Activated CD4-positive, alpha-beta T cell treated with anti-CD3 and anti-CD28 coated beads for 36 hours (primary cell): ENCODE measurements at regions of chr11 and their contacts with region 1.

Region 1: DNA sequence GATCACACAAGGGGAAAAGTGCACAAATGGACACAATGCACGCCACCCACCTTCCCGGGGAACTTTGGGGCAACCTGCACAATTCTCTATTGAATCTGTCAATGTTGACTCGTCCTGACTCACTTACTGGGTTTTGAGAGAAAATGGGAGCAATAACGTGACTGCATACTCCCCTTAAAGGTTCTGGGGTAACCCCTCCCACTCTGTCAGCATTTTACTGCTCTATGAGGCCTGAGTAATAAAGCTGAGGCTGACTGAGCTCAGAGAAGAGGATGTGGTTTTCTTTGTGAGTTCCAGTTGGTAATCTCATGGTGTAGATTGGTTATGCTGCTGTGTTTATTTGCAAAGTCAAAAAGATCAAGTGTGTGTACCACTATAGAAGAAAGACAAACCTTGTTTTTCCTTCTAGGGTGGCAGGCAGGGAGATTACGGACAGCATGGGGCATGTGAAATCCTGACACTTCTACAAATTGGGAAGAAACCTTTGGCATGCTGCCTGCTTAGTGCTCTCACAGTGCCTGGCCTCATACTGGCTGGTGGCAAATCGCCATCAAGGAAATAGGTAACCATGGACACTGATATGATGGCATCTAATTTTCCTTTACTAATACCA is 16.1 kb upstream of the APOA1 start:
- DNase-seq: peak; percentile 70
- ATAC-seq: peak; percentile 92
- H3K4me3 Mint-ChIP-seq: peak overlapping the region; percentile 51
- H3K27ac Mint-ChIP-seq: peak overlapping the region; percentile 90
- H3K4me1 Mint-ChIP-seq: peaks cover 70% of the 10 kb centered on the region
- H3K27me3 Mint-ChIP-seq: no peaks in the 10 kb centered on the region

Region 2: GRCh38 chr11:116148645-116149044 is 704.9 kb before region 1 on chr11:
- CTCF ChIA-PET with region 1: no interaction called
- POLR2A ChIA-PET with region 1: no interaction called
- intact Hi-C with region 1: no loop called
- DNase-seq: no peak
- ATAC-seq: no peak
- H3K4me3 Mint-ChIP-seq: no peak overlapping the region
- H3K27ac Mint-ChIP-seq: no peak overlapping the region
- H3K4me1 Mint-ChIP-seq: no peaks in the 10 kb centered on the region
- H3K27me3 Mint-ChIP-seq: peaks cover 10% of the 10 kb centered on the region

Region 3: GRCh38 chr11:116772443-116773202 is 80.9 kb before region 1 on chr11 and contains the start of gene BUD13:
- CTCF ChIA-PET with region 1: no interaction called
- POLR2A ChIA-PET with region 1: no interaction called
- intact Hi-C with region 1: loop called in 1 of 2 experiments (anchors 5 kb)
- DNase-seq: peak; percentile 97
- ATAC-seq: peak; percentile 91
- H3K4me3 Mint-ChIP-seq: peak within 1 kb of the TSS; percentile 95
- H3K27ac Mint-ChIP-seq: peak within 1 kb of the TSS; percentile 98
- H3K4me1 Mint-ChIP-seq: peaks cover 56% of the 10 kb centered on the region
- H3K27me3 Mint-ChIP-seq: no peaks in the 10 kb centered on the region
- total RNA-seq, gene BUD13: 30.2 to 35.6 TPM

Region 4: DNA sequence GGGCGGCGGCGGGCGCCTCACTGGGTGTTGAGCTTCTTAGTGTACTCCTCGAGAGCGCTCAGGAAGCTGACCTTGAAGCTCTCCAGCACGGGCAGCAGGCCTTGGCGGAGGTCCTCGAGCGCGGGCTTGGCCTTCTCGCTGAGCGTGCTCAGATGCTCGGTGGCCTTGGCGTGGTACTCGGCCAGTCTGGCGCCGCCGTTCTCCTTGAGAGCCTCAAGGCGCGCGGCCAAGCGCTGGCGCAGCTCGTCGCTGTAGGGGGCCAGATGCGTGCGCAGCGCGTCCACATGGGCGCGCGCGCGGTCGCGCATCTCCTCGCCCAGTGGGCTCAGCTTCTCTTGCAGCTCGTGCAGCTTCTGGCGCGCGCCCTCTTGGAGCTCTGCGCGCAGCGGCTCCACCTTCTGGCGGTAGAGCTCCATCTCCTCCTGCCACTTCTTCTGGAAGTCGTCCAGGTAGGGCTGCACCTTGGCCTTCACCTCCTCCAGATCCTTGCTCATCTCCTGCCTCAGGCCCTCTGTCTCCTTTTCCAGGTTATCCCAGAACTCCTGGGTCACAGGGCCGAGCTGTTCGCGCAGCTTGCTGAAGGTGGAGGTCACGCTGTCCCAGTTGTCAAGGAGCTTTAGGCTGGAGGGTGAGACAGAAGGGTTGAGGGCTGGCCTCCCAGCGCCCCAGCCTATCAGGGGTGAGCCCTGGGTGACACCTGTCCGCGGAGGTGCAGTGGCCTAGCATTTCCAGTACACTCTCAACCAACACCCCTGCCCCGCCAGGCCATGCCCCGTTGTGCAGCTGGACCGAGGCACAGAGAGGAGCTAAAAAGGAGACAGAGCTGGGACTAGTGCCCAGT is 17.6 kb before region 1 on chr11:
- CTCF ChIA-PET with region 1: interaction called, 25 read pairs
- POLR2A ChIA-PET with region 1: interaction called, 7 read pairs
- intact Hi-C with region 1: no loop called
- DNase-seq: peak; percentile 90
- ATAC-seq: peak; percentile 95
- H3K4me3 Mint-ChIP-seq: peak overlapping the region; percentile 59
- H3K27ac Mint-ChIP-seq: peak overlapping the region; percentile 31
- H3K4me1 Mint-ChIP-seq: peaks cover 11% of the 10 kb centered on the region
- H3K27me3 Mint-ChIP-seq: peaks cover 3% of the 10 kb centered on the region

Region 5: DNA sequence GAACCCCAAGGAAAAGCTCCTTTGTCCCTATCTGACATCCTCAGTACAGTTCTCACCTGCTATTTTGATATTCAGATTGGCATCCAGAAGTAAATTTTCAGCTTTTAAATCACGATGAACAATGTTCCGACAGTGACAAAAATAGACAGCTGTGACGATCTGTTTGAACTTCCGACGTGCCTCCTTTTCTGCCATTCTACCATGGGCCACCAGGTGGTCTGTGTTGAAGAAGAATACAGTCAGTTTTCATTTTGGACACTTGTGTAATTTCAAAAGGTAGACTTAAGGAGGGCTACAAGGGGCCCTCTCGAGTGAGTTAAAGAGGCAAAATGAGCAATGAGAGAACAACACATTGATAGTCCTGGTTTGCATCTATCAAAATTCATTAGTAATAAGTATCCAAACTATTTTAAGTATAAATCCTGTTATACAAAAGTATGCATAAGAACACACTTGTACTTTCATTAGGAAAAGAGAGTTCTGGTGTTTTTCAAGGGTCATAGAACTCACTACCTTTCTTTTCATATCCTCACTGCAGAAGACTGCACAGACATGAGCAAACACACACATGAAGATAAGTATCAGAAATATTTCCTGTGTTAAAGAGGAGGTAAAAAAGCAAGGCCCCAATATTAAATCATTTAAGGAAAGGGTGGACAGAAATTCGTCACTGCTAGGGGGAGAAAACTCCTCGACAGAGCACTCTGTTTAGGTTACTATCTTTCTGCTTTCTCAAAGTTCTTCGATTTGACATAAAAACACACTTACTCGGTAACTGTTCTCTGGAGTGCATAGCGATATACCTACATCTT is 73.8 kb after region 1 on chr11:
- CTCF ChIA-PET with region 1: no interaction called
- POLR2A ChIA-PET with region 1: no interaction called
- intact Hi-C with region 1: loop called (anchors 2 kb)
- DNase-seq: peak; percentile 72
- ATAC-seq: peak; percentile 33
- H3K4me3 Mint-ChIP-seq: peak overlapping the region; percentile 18
- H3K27ac Mint-ChIP-seq: peak overlapping the region; percentile 49
- H3K4me1 Mint-ChIP-seq: peaks cover 74% of the 10 kb centered on the region
- H3K27me3 Mint-ChIP-seq: no peaks in the 10 kb centered on the region

Region 6: GRCh38 chr11:117010808-117011540 is 157.4 kb after region 1 on chr11:
- CTCF ChIA-PET with region 1: interaction called, 6 read pairs
- POLR2A ChIA-PET with region 1: interaction called, 4 read pairs
- intact Hi-C with region 1: loop called in 1 of 2 experiments (anchors 1 kb)
- DNase-seq: no peak
- ATAC-seq: peak; percentile 93
- H3K4me3 Mint-ChIP-seq: no peak overlapping the region
- H3K27ac Mint-ChIP-seq: peak overlapping the region; percentile 67
- H3K4me1 Mint-ChIP-seq: peaks cover 44% of the 10 kb centered on the region
- H3K27me3 Mint-ChIP-seq: no peaks in the 10 kb centered on the region

Region 7: DNA sequence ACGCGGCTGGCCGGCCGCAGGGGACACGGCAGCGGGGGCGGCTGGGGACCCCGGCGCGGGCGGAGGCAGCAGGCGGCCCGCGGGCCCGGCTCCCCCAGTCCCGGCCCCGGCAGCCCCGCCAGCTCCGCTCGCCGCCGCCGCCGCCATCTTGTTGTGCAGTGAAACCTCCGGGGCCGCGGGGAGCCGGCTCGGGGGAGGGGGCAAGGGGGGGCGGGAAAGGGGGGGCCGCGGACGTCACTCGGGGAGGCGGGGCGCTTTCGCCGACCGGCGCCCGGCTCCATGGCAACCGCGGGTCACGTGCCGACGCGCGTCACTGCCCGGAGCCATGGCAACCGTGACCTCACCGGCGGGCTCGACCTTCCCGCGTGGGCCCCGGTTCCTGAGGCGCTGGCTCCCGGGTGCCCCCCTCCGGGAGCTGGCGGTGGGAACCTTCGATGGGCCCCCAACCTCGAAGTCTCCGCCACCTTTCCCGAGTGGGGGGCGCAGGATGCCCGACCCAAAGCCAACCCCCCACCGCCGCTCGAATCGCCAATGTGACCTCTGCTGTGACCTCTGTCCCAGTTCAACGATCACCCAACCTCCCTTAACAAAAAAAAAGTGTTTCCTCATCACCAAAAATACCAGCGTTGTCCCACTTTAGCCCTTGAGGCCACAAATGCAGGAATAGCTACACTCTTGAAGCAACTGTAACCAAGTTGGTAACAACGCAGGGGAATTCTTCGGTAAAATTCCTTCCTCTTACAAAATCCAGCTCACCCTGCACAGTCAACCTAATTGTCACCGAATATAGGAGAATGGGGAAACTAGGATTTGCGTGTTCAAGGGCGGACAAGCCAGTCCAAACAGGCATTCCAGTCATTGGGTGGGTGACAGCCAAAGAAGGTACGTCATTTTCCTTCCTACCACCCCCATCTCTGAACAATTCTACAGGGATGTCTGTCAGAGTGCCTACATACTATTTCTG is 245.0 kb after region 1 on chr11 and contains the start of gene SIK3:
- CTCF ChIA-PET with region 1: interaction called, 3 read pairs
- POLR2A ChIA-PET with region 1: interaction called, 5 read pairs
- intact Hi-C with region 1: loop called in 1 of 2 experiments (anchors 1 kb)
- DNase-seq: peak; percentile 96
- ATAC-seq: peak; percentile 71
- H3K4me3 Mint-ChIP-seq: peak within 1 kb of the TSS; percentile 93
- H3K27ac Mint-ChIP-seq: peak within 1 kb of the TSS; percentile 93
- H3K4me1 Mint-ChIP-seq: peaks cover 46% of the 10 kb centered on the region
- H3K27me3 Mint-ChIP-seq: no peaks in the 10 kb centered on the region
- total RNA-seq, gene SIK3: 23.6 to 25.3 TPM

Region 8: DNA sequence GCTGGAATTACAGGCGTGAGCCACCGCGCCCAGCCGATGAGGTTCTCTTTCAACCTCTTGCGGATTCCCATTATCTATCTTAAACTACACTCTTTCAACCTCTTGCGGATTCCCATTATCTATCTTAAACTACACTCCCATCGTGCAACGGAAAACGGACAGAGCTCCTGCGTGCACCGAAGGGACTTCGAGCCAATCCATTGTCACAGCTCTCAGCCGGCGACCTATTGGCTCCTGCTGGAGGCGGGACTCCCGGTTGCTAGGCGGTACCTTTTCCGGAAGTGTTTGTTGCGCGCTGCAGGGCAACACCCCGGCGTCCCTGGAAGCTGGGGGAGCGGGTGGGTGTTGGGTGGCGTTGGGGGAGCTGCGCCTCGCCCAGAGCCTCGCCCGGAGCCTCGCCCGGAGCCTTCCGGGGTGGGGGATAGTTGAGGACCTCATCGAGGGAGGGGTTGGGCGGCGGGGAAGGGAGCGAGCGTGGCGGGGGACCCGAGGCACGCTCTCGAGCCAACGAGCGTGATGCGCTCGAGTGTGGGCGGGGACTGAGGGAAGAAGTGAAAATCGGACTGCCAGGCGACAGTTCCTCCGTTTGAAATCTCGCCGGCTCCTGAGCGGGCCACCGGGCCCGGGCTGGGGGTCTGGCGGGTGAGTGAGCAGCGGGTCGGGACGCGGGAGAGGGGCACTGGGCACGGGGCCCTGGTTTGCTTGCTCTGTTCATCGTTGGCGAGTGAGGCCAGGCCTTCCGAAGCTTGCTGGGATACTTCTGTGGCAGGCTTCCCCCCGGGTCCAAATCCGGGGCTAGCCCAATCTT is 474.2 kb after region 1 on chr11 and contains the start of gene CEP164:
- CTCF ChIA-PET with region 1: no interaction called
- POLR2A ChIA-PET with region 1: no interaction called
- intact Hi-C with region 1: loop called in 1 of 2 experiments (anchors 5 kb)
- DNase-seq: peak; percentile 96
- ATAC-seq: peak; percentile 97
- H3K4me3 Mint-ChIP-seq: no peak within 1 kb of the TSS
- H3K27ac Mint-ChIP-seq: peak within 1 kb of the TSS; percentile 73
- H3K4me1 Mint-ChIP-seq: peaks cover 13% of the 10 kb centered on the region
- H3K27me3 Mint-ChIP-seq: no peaks in the 10 kb centered on the region
- total RNA-seq, gene CEP164: 30.3 to 31.0 TPM